ENCODE measurements at regions of chr10 and their contacts with region 1.

Region 1: GRCh38 chr10:131885391-131886161 is 15.2 kb upstream of the PPP2R2D start:
- DNase-seq: peak; percentile 80
- H3K4me3 ChIP-seq: no peak overlapping the region
- H3K27ac ChIP-seq: no peak overlapping the region
- H3K4me1 ChIP-seq: no peaks in the 10 kb centered on the region
- H3K27me3 ChIP-seq: no peaks in the 10 kb centered on the region
- CTCF ChIP-seq: peak; percentile 96

Region 2: DNA sequence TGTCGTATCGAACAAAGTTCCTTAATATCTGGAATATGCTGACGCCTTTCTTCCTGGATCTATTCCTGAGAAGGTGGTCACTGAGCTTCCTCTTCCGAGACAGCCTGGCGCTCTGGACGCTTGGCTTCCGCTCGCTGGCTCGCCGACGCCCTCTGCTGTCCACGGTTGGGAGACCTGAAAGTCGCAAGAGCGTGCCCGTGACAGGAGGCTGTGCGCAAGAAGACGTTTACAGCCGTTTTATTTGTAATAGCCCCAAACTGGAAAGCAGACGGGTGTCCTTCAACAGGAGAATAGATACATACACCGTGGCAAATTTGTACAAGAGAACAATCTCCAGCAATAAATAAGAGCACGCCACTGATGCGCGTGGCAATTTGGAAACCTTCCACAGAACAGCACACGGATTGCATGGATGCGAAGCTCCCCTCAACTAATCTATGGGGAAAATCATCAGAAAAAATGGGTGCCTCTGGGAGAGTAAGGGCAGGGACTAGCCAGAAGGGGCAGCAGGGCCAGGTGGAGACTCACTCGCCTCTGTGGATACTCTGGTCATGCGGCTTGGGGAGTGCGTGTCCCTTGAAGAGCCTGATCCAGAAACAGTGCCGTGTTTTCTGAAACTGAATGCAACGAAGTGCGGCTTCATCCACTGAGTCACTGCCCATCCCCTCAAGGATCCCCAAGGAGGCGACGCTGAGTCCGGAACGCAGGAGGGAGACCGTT is 137.7 kb after region 1 on chr10:
- CTCF ChIA-PET with region 1: interaction called, 27 read pairs
- POLR2A ChIA-PET with region 1: no interaction called
- intact Hi-C with region 1: loop called (anchors 1 kb)
- DNase-seq: peak; percentile 83
- H3K4me3 ChIP-seq: peak overlapping the region; percentile 29
- H3K27ac ChIP-seq: no peak overlapping the region
- H3K4me1 ChIP-seq: no peaks in the 10 kb centered on the region
- H3K27me3 ChIP-seq: peaks cover 42% of the 10 kb centered on the region
- CTCF ChIP-seq: peak; percentile 94

Region 3: GRCh38 chr10:132142411-132143161 is 257.0 kb after region 1 on chr10:
- CTCF ChIA-PET with region 1: no interaction called
- POLR2A ChIA-PET with region 1: no interaction called
- intact Hi-C with region 1: loop called (anchors 5 kb)
- DNase-seq: peak; percentile 45
- H3K4me3 ChIP-seq: no peak overlapping the region
- H3K27ac ChIP-seq: no peak overlapping the region
- H3K4me1 ChIP-seq: no peaks in the 10 kb centered on the region
- H3K27me3 ChIP-seq: no peaks in the 10 kb centered on the region
- CTCF ChIP-seq: peak; percentile 92

Measured in A673 (cell line).